Tibial artery (tissue), 4 donors: ENCODE measurements at regions of chr9 and their contacts with region 1.

Region 1: DNA sequence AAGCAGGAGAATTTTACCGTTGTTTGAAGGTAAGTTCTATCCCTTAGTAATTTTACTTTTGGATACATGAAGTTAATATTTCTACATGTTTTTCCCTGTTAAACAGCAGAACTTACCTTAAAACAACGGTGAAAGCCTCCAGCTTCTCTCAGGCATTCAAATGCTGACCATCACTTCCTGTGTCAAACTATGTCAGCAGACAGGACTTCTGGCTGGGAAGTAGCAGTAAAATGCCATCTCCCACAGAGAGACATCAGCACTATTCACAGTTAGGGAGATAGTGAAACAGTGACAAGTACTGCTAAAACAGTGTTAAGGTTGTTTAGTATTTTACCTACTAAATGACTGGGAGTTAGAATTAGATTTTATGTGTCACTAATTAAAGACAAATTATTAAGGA is 34.2 kb upstream of the GOLGA1 start:
- DNase-seq: no peak
- H3K4me3 ChIP-seq: no peak overlapping the region
- H3K27ac ChIP-seq: no peak overlapping the region
- H3K4me1 ChIP-seq: no peaks in the 10 kb centered on the region
- H3K27me3 ChIP-seq: no peaks in the 10 kb centered on the region
- CTCF ChIP-seq: no peak

Region 2: GRCh38 chr9:126932871-126933321 is 1957.8 kb after region 1 on chr9:
- intact Hi-C with region 1: loop called (anchors 5 kb)
- DNase-seq: no peak
- H3K4me3 ChIP-seq: no peak overlapping the region
- H3K27ac ChIP-seq: no peak overlapping the region
- H3K4me1 ChIP-seq: no peaks in the 10 kb centered on the region
- H3K27me3 ChIP-seq: no peaks in the 10 kb centered on the region
- CTCF ChIP-seq: no peak